ENCODE measurements at regions of chr19 and their contacts with region 1.

Region 1: DNA sequence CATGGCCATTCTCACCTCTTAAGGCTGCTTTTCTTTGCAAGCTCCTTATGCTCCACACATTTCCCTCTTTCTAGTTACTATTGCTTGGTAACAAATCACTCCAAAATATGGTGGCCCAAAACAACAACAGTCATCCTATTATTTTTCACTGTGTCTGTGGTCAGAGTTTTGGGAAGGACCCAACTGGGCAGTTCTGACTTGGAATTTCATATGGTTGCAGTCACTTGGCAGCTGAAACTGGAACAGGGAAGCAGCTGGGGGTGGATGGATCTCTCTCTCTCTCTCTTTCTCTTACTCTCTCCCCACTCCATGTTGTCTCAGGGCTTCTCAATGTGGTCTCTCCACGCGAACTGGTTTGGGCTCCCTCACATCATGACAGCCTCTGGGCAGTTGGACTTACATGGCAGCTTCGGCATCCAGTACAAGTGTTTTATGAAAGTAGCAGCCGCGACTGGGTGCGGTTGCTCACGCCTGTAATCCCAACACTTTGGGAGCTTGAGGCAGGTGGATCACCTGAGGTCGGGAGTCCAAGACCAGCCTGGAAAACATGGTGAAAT is 39.6 kb downstream of the NUMBL start:
- DNase-seq: peak in 1 of 2 donors; percentile 85
- H3K4me3 ChIP-seq: no peak overlapping the region
- H3K27ac ChIP-seq: peak overlapping the region; percentile 49 to 63
- H3K4me1 ChIP-seq: peaks cover 13 to 31% of the 10 kb centered on the region in 2 donors
- H3K27me3 ChIP-seq: no peaks in the 10 kb centered on the region
- CTCF ChIP-seq: no peak

Region 2: GRCh38 chr19:40690693-40691420 is 40.0 kb after region 1 on chr19:
- intact Hi-C with region 1: loop called (anchors 5 kb)
- DNase-seq: peak; percentile 71 to 97
- H3K4me3 ChIP-seq: peak overlapping the region; percentile 84 to 86
- H3K27ac ChIP-seq: peak overlapping the region; percentile 89 to 93
- H3K4me1 ChIP-seq: peaks cover 6 to 24% of the 10 kb centered on the region in 2 donors
- H3K27me3 ChIP-seq: no peaks in the 10 kb centered on the region
- CTCF ChIP-seq: no peak

Measured in ascending aorta (tissue), 2 donors.